Common myeloid progenitor, CD34-positive (primary cell): ENCODE measurements at regions of chr21 and their contacts with region 1.

Region 1: DNA sequence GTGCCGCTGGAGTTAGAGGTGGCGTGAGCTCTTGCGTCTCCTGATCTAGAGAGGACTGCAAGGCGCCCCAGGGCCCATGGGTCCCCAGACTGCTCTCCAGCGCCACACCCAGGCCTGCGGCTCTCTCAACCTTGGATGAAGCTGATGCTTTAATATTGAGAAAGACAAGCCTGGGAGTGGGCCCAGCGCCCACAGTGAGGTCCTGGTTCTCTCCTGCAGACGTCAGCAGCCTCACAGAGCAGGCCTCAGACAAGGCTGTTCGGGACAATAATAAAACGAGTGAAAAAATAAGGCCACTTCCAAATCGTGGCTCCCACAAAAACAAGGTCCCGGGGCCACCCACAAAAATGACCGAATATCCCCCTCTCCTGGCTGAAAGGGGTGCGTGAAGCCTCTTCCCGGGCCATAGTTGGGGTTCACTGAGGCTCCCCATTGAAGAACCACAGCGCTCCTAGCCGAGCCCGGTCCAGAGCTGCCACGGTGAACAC is 6.0 kb upstream of the DNMT3L start:
- DNase-seq: peak; percentile 43 to 60 (median 59)
- H3K4me3 ChIP-seq: no peak overlapping the region
- H3K27ac ChIP-seq: no peak overlapping the region
- H3K4me1 ChIP-seq: peaks cover 0 to 2% (median 0%) of the 10 kb centered on the region in 4 experiments
- H3K27me3 ChIP-seq: no peaks in the 10 kb centered on the region

Region 2: DNA sequence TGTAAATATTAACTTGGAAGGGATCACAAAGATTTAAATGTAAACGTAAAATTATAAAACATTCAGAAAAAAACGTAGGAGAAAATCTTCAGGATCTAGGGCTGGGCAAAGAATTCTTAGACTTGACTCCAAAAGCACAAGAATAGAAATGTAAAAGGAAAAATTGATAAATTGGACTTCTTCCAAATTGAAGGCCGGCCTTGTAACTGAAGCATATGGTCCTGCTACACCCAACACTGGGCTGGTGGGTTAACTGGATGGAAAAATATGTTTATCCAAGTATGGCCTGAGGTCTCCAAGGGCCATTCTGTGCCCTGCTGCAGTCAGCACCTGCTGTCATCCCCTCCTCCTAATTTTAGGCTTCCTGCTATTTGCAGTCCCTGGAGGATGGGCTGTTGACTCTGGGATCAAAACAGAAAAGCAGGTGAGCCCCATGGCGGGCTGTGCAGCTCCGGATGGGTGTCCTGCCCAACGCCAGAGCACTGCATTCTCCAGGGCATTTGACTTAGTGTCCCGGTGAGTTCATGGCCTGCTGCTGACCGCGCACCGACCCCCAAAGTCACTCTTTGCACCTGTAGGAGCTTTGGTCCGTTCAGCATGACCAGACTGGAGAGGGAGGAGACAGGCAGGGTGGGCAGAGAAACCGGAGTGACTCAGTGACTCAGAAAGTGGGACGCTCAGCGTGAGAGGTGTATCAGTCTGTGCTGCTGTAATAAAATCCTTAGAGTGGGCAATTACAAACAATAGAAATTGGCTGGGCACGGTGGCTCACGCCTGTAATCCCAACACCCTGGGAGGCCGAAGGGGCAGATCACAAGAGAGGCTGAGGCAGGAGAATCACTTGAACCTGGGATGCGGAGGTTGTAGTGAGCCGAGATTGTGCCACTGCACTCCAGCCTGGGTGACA is 11.9 kb after region 1 on chr21:
- CTCF ChIA-PET with region 1: interaction called, 11 read pairs
- POLR2A ChIA-PET with region 1: no interaction called
- DNase-seq: no peak
- H3K4me3 ChIP-seq: no peak overlapping the region
- H3K27ac ChIP-seq: no peak overlapping the region
- H3K4me1 ChIP-seq: peaks cover 0 to 12% (median 11%) of the 10 kb centered on the region in 4 experiments
- H3K27me3 ChIP-seq: no peaks in the 10 kb centered on the region